ENCODE measurements at regions of chr17 and their contacts with region 1.

Region 1: GRCh38 chr17:65100316-65101140 is 36.6 kb upstream of the RGS9 start:
- DNase-seq: peak; percentile 96
- H3K4me3 Mint-ChIP-seq: peak overlapping the region; percentile 91
- H3K27ac Mint-ChIP-seq: peak overlapping the region; percentile 95
- H3K4me1 Mint-ChIP-seq: peaks cover 21% of the 10 kb centered on the region
- H3K27me3 Mint-ChIP-seq: peaks cover 17% of the 10 kb centered on the region

Region 2: DNA sequence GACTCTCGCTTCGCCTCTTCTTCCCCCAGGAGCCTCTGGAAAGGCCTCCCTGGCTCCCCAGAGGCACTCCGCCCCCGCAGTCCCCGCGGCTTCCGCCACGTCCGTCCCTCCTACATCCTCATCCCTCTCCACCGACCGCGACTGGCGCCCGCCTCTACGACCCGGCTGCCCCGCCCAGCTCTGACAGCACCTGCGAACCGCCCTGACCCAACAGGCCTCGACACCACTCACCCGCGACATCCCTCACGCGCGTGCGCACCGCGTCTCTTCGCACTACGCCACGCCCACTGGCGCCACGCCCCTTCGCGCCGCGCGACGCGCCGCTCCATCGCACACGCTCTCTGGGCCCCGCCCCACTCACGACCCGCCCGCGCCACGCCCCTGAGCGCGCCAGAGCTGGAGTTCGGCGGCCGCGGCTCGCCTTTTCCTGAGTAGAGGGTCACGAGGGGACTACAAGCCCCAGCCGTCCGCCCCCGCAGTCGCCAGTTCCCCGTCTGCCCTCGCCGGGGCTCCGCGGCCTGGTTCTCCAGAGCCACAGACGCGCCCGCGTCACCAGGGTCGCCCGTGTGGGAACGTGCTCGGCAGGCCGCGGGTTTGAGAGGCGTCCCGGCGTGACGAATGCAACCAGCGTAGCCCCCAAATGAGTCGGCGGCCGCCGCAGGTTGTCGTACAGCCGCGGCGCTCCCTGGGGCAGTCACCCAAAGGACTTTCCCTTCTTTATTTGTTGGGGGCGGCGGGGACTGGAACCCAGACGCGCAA is 125.0 kb before region 1 on chr17:
- intact Hi-C with region 1: loop called (anchors 1 kb)
- DNase-seq: peak; percentile 100
- H3K4me3 Mint-ChIP-seq: peak overlapping the region; percentile 76
- H3K27ac Mint-ChIP-seq: peak overlapping the region; percentile 93
- H3K4me1 Mint-ChIP-seq: peaks cover 47% of the 10 kb centered on the region
- H3K27me3 Mint-ChIP-seq: no peaks in the 10 kb centered on the region

Region 3: GRCh38 chr17:65055348-65056261 is 44.9 kb before region 1 on chr17:
- intact Hi-C with region 1: loop called (anchors 1 kb)
- DNase-seq: peak; percentile 89
- H3K4me3 Mint-ChIP-seq: peak overlapping the region; percentile 97
- H3K27ac Mint-ChIP-seq: peak overlapping the region; percentile 92
- H3K4me1 Mint-ChIP-seq: peaks cover 43% of the 10 kb centered on the region
- H3K27me3 Mint-ChIP-seq: peaks cover 6% of the 10 kb centered on the region

Region 4: DNA sequence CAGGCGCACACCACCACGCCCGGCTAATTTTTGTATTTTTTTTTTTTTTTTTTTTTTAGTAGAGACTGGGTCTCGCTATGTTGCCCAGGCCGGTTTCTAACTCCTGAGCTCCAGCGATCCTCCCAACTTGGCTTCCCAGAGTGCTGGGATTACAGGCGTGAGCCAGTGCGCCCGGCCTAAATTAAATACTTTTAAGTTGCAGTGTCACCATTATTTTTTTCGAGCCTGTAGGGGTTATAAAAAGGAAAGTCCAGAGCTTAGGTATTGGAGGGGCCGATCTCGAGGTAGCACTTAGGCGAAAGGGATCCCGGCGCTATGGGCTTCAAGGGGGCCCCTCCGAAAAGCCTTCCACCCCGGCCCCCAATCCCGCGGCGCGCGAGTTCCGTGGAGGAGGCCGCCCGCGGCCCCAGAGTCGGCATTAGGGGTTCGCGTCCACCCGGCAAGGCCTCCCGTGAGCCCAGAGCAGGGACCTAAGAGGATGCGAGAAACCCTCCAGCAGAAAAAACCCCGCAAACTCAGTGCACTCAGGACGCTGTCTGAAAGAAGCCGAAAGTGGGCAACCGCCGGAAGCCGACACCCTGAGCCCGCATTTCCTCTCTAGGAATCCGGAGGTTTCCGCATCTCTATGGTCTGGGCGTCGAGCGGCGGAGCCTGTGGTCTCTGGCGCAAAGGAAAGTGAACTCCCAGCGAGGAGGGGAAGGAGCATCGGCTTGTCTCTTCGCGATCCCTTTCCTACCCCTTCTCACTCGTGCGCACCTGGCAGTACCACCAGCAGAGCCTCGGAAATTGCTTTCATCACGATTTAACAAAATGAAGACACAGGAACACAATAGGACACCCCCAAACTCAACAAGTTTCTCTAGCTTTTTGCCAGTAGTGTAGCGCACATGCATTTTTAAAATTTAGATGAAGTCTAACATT is 22.6 kb after region 1 on chr17:
- intact Hi-C with region 1: loop called (anchors 1 kb)
- DNase-seq: peak; percentile 96
- H3K4me3 Mint-ChIP-seq: peak overlapping the region; percentile 86
- H3K27ac Mint-ChIP-seq: peak overlapping the region; percentile 97
- H3K4me1 Mint-ChIP-seq: peaks cover 22% of the 10 kb centered on the region
- H3K27me3 Mint-ChIP-seq: peaks cover 12% of the 10 kb centered on the region

Region 5: DNA sequence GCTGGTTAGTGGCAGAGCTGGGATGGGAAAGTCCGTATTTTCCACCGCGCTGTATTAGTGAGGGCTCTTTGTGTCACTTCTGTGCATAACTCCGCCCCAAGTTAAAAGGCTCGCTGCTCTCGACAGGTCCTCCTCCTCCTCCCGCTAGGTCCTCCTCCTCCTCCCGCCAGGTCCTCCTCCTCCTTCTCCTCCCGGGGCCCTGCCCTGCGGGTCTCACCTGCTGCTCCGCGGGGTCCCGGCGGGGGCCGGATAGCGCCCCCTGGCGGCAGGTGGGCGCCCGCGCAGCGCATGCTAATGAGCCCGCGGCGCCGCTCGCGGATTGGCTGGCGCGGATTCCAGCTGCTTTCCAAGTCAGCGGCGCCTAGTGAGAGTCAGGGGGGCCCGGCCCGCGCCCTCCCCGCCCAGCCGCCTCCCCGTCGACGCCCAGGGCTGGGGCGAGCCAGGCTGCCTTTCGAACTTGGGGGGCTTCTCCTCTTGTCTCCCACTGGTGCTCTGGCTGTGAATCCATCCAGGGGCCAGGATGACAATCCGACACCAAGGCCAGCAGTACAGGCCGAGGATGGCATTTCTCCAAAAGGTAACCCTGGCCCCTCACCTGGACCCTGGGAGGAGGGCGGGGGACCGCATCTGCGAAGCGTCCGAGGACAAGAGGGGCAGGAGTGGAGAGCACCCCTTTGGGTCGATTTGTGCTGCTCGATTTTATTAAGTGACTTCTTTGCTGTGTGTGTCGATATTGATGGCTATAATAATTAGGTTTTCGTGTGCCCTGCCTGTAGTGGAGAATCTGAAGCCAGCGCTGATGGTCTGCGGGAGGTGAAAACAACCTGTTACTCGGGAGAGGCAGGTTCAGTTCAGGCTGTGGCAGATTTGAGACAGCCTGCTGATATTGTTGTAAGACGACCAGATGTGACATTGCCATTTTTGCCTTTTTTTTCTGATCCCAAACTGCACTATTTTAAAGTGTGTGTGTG is 36.8 kb after region 1 on chr17 and contains the start of gene RGS9:
- intact Hi-C with region 1: loop called (anchors 2 kb)
- DNase-seq: peak; percentile 97
- H3K4me3 Mint-ChIP-seq: peak within 1 kb of the TSS; percentile 80
- H3K27ac Mint-ChIP-seq: peak within 1 kb of the TSS; percentile 50
- H3K4me1 Mint-ChIP-seq: peaks cover 31% of the 10 kb centered on the region
- H3K27me3 Mint-ChIP-seq: peaks cover 15% of the 10 kb centered on the region
- total RNA-seq, gene RGS9: 2.2 and 3.1 TPM in 2 replicates

Region 6: GRCh38 chr17:65198653-65199382 is 98.3 kb after region 1 on chr17:
- intact Hi-C with region 1: loop called (anchors 5 kb)
- DNase-seq: peak; percentile 75
- H3K4me3 Mint-ChIP-seq: no peak overlapping the region
- H3K27ac Mint-ChIP-seq: no peak overlapping the region
- H3K4me1 Mint-ChIP-seq: peaks cover 24% of the 10 kb centered on the region
- H3K27me3 Mint-ChIP-seq: peaks cover 8% of the 10 kb centered on the region

Region 7: GRCh38 chr17:66431910-66432683 is 1331.6 kb after region 1 on chr17:
- intact Hi-C with region 1: no loop called
- DNase-seq: no peak
- H3K4me3 Mint-ChIP-seq: no peak overlapping the region
- H3K27ac Mint-ChIP-seq: peak overlapping the region; percentile 16
- H3K4me1 Mint-ChIP-seq: peaks cover 58% of the 10 kb centered on the region
- H3K27me3 Mint-ChIP-seq: no peaks in the 10 kb centered on the region